H1 (cell line): ENCODE measurements at regions of chrX and their contacts with region 1.

Region 1: GRCh38 chrX:136880452-136881013 is at the start of gene RBMX:
- DNase-seq: peak; percentile 67 to 86
- H3K4me3 ChIP-seq: peak within 1 kb of the TSS; percentile 87 to 100 (median 92)
- H3K27ac ChIP-seq: peak within 1 kb of the TSS; percentile 97
- H3K4me1 ChIP-seq: peaks cover 0 to 5% (median 0%) of the 10 kb centered on the region in 4 experiments; a peak in 1 of 7 replicates
- H3K27me3 ChIP-seq: no peaks in the 10 kb centered on the region
- CTCF ChIP-seq: no peak
- EP300 ChIP-seq: no peak
- POLR2A ChIP-seq: peak; percentile 99
- RAD21 ChIP-seq: no peak
- total RNA-seq, gene RBMX: 458 and 476 TPM in 2 replicates

Region 2: DNA sequence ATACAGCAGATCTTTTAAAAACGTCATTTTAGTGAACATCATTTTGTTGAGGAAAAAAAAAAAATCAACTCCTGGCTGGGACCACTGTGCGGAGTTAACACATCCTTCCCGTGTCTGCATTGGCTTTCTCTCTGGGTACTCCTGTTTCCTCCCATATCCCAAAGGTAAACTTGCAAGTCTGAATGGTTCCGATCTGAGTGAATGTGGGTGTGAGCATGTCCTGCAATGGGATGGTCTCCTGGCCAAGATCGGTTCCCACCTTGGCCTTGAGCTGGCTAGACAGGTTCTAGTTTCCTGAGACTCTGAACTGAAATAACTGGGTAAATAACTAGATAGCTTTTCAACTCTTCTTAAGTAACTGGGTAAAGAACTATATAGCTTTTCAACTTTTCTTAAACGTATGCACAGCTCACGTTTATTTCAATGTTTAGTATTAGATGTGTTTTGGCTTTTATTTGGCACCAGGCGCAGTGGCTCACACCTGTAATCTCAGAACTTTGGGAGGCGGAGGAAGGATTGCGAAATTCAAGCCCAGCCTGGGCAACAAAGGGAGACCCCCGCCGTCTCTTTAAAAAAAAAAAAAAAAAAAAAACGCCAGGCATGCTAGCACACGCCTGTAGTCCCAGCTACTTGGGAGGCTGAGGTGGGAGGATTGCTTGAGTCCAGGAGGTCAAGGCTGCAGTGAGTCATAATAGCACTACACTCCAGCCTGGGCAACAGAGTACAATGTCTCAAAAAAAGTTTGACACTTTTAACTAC is 14.0 kb before region 1 on chrX:
- CTCF ChIA-PET with region 1: no interaction called
- POLR2A ChIA-PET with region 1: interaction called, 168 read pairs
- DNase-seq: no peak
- H3K4me3 ChIP-seq: no peak overlapping the region
- H3K27ac ChIP-seq: no peak overlapping the region
- H3K4me1 ChIP-seq: no peaks in the 10 kb centered on the region
- H3K27me3 ChIP-seq: no peaks in the 10 kb centered on the region
- CTCF ChIP-seq: no peak
- EP300 ChIP-seq: no peak
- POLR2A ChIP-seq: peak in 1 of 2 experiments; percentile 78; a peak in 2 of 3 replicates
- RAD21 ChIP-seq: no peak

Region 3: GRCh38 chrX:136892412-136892811 is 11.9 kb after region 1 on chrX:
- CTCF ChIA-PET with region 1: no interaction called
- POLR2A ChIA-PET with region 1: interaction called, 32 read pairs
- DNase-seq: no peak
- H3K4me3 ChIP-seq: no peak overlapping the region
- H3K27ac ChIP-seq: no peak overlapping the region
- H3K4me1 ChIP-seq: no peaks in the 10 kb centered on the region
- H3K27me3 ChIP-seq: no peaks in the 10 kb centered on the region
- CTCF ChIP-seq: no peak
- EP300 ChIP-seq: no peak
- POLR2A ChIP-seq: no peak
- RAD21 ChIP-seq: no peak

Region 4: DNA sequence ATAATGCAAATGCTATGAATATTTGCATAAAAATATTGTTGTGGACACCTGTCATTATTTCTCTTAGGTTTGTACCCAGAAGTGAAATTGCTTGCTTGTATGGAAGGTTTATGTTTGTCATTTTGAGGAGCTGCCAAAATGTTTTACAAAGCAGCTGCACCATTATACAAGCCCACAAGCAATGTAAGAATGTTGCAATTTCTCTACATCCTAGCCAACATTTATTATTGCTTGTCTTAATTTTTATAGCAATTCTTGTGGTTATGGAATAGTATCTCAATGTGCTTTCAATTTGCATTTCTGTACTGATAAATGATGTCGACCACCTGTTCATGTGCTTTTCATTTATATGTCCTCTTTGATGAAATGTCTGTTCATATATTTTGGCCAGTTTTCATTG is 18.7 kb after region 1 on chrX:
- CTCF ChIA-PET with region 1: no interaction called
- POLR2A ChIA-PET with region 1: interaction called, 32 read pairs
- DNase-seq: no peak
- H3K4me3 ChIP-seq: no peak overlapping the region
- H3K27ac ChIP-seq: no peak overlapping the region
- H3K4me1 ChIP-seq: no peaks in the 10 kb centered on the region
- H3K27me3 ChIP-seq: no peaks in the 10 kb centered on the region
- CTCF ChIP-seq: no peak
- EP300 ChIP-seq: no peak
- POLR2A ChIP-seq: no peak
- RAD21 ChIP-seq: no peak

Region 5: GRCh38 chrX:136909706-136910564 is 29.4 kb after region 1 on chrX:
- CTCF ChIA-PET with region 1: no interaction called
- POLR2A ChIA-PET with region 1: interaction called, 46 read pairs
- DNase-seq: peak; percentile 65 to 72
- H3K4me3 ChIP-seq: peak overlapping the region; percentile 79 to 95 (median 89)
- H3K27ac ChIP-seq: no peak overlapping the region; the same call in 1 of the 2 replicates
- H3K4me1 ChIP-seq: no peaks in the 10 kb centered on the region; a peak in 1 of 7 replicates
- H3K27me3 ChIP-seq: no peaks in the 10 kb centered on the region
- CTCF ChIP-seq: no peak
- EP300 ChIP-seq: no peak
- POLR2A ChIP-seq: peak in 1 of 2 experiments; percentile 82; a peak in 1 of 3 replicates
- RAD21 ChIP-seq: no peak

Region 6: GRCh38 chrX:136920001-136920400 is 39.5 kb after region 1 on chrX:
- CTCF ChIA-PET with region 1: interaction called, 4 read pairs
- POLR2A ChIA-PET with region 1: interaction called, 15 read pairs
- DNase-seq: no peak
- H3K4me3 ChIP-seq: no peak overlapping the region
- H3K27ac ChIP-seq: no peak overlapping the region
- H3K4me1 ChIP-seq: no peaks in the 10 kb centered on the region
- H3K27me3 ChIP-seq: no peaks in the 10 kb centered on the region
- CTCF ChIP-seq: no peak
- EP300 ChIP-seq: no peak
- POLR2A ChIP-seq: no peak
- RAD21 ChIP-seq: no peak